PC-9 (cell line): ENCODE measurements at regions of chr19 and their contacts with region 1.

Region 1: DNA sequence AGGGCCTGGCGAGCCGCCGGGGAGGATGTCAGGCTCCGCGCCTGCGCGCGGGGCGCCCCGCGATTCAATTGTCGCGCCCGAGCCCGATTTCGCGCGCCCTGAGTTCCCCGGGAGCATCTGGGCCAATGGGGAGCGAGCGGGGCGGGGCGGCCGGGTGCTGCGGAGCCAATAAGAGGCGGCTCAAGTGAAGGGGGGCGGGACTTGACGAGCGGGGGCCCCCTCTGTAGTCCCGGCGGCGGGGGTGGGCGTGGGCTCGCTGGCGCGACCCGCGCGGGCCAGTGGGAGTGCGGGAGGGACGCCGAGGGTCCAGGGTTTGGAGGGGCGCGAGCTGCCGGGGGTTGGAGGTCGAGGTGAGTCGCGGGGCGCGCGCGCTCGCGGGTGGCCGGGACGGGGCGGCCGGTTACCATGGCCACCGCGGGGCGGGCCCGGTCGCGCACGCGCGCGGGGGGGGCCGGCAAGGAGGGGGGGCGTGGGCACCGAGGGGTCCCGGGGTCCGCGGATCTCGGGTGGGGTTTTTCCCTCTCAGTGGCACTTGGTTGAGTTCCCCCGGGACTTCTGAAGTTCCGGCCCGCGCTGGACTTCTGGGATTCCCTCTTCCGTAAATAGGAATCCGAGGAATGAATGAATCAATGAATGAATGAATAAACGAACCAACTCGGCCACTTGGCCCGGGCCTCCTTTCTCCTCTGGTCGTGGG is 744 bp downstream of the UHRF1 start:
- DNase-seq: peak; percentile 72 to 85
- H3K4me3 ChIP-seq: peak overlapping the region; percentile 55
- H3K27ac ChIP-seq: peak overlapping the region; percentile 84
- H3K4me1 ChIP-seq: peaks cover 41% of the 10 kb centered on the region
- H3K27me3 ChIP-seq: no peaks in the 10 kb centered on the region
- CTCF ChIP-seq: no peak

Region 2: GRCh38 chr19:4781801-4782200 is 128.2 kb before region 1 on chr19:
- CTCF ChIA-PET with region 1: no interaction called
- POLR2A ChIA-PET with region 1: no interaction called
- intact Hi-C with region 1: no loop called
- DNase-seq: no peak
- H3K4me3 ChIP-seq: no peak overlapping the region
- H3K27ac ChIP-seq: no peak overlapping the region
- H3K4me1 ChIP-seq: no peaks in the 10 kb centered on the region
- H3K27me3 ChIP-seq: peaks cover 41% of the 10 kb centered on the region
- CTCF ChIP-seq: no peak

Region 3: GRCh38 chr19:4815426-4816201 is 94.4 kb before region 1 on chr19:
- CTCF ChIA-PET with region 1: interaction called, 9 read pairs
- POLR2A ChIA-PET with region 1: no interaction called
- intact Hi-C with region 1: loop called (anchors 1 kb)
- DNase-seq: peak; percentile 69 to 74
- H3K4me3 ChIP-seq: peak overlapping the region; percentile 52; the same call in 1 of the 2 replicates
- H3K27ac ChIP-seq: no peak overlapping the region
- H3K4me1 ChIP-seq: no peaks in the 10 kb centered on the region
- H3K27me3 ChIP-seq: no peaks in the 10 kb centered on the region
- CTCF ChIP-seq: no peak

Region 4: GRCh38 chr19:4969772-4970531 is 59.9 kb after region 1 on chr19:
- CTCF ChIA-PET with region 1: interaction called, 8 read pairs
- POLR2A ChIA-PET with region 1: no interaction called
- intact Hi-C with region 1: loop called (anchors 5 kb)
- DNase-seq: no peak
- H3K4me3 ChIP-seq: peak overlapping the region; percentile 62
- H3K27ac ChIP-seq: no peak overlapping the region
- H3K4me1 ChIP-seq: peaks cover 31% of the 10 kb centered on the region
- H3K27me3 ChIP-seq: no peaks in the 10 kb centered on the region
- CTCF ChIP-seq: no peak